GM13976 (cell line): ENCODE measurements at regions of chr22 and their contacts with region 1.

Region 1: GRCh38 chr22:27880778-27881394 is 38.2 kb downstream of the PITPNB start:
- DNase-seq: no peak
- CTCF ChIP-seq: peak; percentile 58

Region 2: DNA sequence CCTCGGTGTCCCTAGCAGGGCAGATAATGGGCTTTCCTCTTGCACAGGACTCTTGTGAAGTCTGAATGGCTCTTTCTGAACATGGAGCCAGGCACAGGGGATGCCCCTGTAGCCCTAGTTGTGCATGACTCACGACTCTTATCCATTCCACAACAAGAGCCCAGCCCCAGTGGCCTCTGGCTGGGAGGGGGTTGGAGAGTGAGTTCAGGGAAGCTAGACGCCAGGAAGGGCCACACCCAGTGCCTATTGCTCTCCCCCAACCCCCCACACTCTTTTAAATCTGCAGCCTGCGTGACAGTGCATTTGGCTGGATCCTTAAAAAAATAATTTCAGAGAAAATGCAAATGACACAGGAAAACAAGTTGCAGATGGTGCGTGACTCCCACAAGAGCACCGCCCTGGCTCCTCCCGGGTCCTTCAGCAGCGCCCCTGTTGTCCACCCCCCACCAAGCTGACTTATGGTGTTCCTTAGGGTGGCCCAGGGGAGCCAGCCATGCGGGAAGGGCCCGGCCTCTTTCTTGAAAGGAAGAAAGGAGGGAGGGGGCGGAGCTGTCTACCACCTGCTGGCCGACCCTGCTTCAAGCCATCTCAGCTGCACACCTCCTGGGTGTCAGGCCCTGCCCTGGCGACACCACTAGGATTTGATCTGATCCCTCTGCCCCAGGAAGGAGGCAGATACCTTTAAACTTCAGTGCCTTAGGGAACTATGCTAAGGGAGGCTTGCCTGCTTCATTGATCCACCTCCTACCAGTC is 154.0 kb before region 1 on chr22:
- in situ Hi-C with region 1: no loop called
- DNase-seq: no peak
- CTCF ChIP-seq: no peak

Region 3: GRCh38 chr22:28009272-28009827 is 128.5 kb after region 1 on chr22:
- in situ Hi-C with region 1: loop called (anchors 10 kb)
- DNase-seq: peak; percentile 90
- CTCF ChIP-seq: peak; percentile 97

Region 4: DNA sequence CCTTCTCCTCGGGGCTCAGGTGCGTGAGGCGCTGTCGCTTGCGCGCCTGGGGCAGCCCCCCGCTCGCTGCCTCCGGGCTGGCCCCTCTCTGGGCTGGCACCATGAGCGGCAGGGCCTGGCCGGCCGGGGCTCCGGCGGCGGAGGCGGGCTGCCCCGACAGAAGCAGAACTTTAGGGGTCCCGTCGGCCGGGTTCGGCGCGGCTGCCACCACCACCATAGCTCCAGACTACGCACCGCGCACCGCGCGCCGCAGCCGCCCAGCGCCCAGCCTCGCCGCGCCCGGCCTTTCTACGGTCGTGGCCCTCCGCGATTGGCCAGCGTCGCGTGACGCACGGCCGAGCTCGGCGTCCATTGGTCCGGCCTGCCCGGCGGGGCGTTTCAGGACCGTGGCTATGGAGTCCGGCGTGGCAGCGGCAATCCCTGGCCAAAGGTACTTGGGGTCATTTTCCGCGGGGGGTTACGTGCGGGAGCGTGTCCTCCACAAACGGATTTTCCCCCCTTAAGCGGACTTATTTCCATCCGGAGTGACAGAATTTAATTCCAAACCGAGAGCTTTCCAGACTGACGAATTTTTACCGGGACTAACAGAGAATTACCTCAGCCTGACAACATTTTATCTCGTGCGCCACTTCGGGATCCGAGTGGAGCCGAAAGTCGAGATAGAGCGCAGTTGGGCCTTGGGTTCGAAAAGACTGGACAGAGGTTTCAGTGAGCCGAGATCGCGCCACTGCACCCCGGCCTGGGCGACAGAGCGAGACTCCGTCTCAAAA is 919.6 kb after region 1 on chr22 and contains the start of gene XBP1:
- in situ Hi-C with region 1: loop called (anchors 25 kb)
- DNase-seq: peak; percentile 97
- CTCF ChIP-seq: no peak